Endothelial cell of umbilical vein (primary cell): ENCODE measurements at regions of chr19 and their contacts with region 1.

Region 1: DNA sequence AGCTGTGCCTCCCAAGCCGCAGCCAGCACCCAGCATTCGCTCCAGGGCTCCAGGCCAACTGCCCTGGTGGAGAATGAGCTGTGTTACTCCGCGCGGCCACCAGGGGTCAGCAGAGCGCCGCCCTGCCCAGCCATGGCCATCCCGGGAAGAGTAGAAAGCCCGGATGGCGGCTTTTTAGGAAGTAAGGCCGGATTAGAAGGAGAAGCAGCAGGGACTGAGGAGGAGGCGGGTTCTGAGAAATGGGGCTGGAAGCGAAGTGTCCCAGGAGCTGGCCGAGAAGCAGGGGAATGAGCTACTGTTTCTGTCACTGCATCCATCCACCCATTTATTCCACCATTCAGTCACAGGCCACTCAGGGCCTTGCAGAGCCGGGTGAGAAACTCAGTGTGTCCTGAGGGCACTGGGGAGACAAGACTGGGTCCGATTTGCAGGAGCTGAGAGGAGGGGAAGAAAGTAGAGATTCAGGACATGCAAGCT is 6.6 kb upstream of the NPAS1 start:
- DNase-seq: peak; percentile 66
- H3K4me3 ChIP-seq: no peak overlapping the region
- H3K27ac ChIP-seq: no peak overlapping the region
- H3K4me1 ChIP-seq: no peaks in the 10 kb centered on the region
- H3K27me3 ChIP-seq: no peaks in the 10 kb centered on the region
- CTCF ChIP-seq: peak; percentile 98 to 99
- POLR2A ChIP-seq: no peak

Region 2: DNA sequence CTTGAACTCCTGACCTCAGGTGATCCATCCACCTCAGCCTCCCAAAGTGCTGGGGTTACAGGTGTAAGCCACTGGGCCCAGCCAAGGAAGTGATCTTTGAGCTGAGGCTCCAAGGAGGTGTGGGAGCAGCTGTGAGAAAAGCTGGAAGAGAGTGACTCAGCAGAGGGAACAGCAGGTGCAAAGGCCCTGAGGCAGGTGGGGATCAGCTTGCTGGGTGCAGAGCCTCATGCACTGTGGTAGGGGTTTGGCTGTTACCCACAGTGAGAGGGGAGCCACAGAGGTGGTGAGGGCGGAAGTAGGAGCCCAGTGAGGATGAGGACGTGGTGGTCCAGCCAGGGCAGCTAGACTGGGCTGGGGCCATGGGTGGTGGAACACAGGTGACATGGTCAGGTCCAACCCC is 13.1 kb after region 1 on chr19:
- CTCF ChIA-PET with region 1: interaction called, 29 read pairs
- POLR2A ChIA-PET with region 1: no interaction called
- dilution Hi-C with region 1: no loop called
- intact Hi-C with region 1: no loop called
- DNase-seq: no peak
- H3K4me3 ChIP-seq: no peak overlapping the region
- H3K27ac ChIP-seq: no peak overlapping the region
- H3K4me1 ChIP-seq: peaks cover 9% of the 10 kb centered on the region
- H3K27me3 ChIP-seq: peaks cover 33 to 38% of the 10 kb centered on the region in 2 experiments
- CTCF ChIP-seq: no peak
- POLR2A ChIP-seq: no peak

Region 3: DNA sequence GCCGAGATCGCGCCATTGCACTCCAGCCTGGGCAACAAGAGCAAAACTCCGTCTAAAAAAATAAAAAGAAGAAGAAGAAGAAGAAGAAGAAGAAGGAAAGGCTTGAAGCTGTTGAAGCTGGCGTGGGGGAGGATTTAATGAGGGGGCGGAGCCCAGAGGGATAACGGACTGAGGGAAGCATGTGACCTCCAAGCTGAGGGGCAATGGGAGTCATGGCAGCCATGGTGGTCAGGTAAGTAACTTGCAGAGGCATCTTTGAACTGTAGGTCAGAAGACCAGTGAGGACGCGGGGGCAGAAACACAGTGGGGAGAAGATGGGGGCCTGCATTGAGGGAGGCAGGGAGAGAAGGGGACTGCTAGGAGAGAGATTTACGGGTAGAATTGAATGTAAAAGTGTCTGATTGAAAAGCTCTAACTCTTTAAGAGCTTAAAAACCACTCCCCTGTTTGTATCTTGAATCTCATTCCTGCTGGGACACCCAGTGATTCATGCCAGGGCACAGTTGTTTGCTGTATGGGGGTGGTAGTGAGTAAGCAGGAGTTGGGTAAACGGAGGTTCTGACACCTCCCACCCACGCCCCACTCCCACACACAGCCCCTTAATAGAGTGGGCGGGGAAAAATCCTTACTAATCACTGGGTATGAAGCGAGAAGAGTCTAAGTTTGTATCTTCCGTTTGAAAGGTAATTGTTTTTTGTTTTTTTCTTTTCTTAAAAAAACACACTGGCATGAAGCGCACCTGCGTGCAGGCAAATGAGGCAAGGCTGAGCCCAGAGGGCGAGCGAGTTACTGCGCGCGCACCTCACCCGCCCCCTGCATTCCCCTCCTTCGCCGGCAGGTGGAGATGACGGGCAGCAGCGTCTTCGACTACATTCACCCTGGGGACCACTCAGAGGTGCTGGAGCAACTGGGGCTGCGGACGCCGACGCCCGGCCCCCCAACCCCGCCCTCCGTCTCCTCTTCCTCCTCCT is 22.3 kb after region 1 on chr19:
- CTCF ChIA-PET with region 1: interaction called, 14 read pairs
- POLR2A ChIA-PET with region 1: no interaction called
- dilution Hi-C with region 1: no loop called
- intact Hi-C with region 1: loop called (anchors 1 kb)
- DNase-seq: peak; percentile 92
- H3K4me3 ChIP-seq: peak overlapping the region; percentile 32 to 75 (median 73)
- H3K27ac ChIP-seq: no peak overlapping the region
- H3K4me1 ChIP-seq: peaks cover 8% of the 10 kb centered on the region
- H3K27me3 ChIP-seq: peaks cover 0 to 2% of the 10 kb centered on the region in 2 experiments
- CTCF ChIP-seq: peak; percentile 84 to 94
- POLR2A ChIP-seq: no peak

Region 4: GRCh38 chr19:47047763-47048405 is 34.8 kb after region 1 on chr19:
- CTCF ChIA-PET with region 1: no interaction called
- POLR2A ChIA-PET with region 1: no interaction called
- dilution Hi-C with region 1: no loop called
- intact Hi-C with region 1: no loop called
- DNase-seq: peak; percentile 90
- H3K4me3 ChIP-seq: peak overlapping the region; percentile 37 to 84 (median 62)
- H3K27ac ChIP-seq: no peak overlapping the region
- H3K4me1 ChIP-seq: peaks cover 3% of the 10 kb centered on the region
- H3K27me3 ChIP-seq: no peaks in the 10 kb centered on the region
- CTCF ChIP-seq: no peak
- POLR2A ChIP-seq: no peak

Region 5: GRCh38 chr19:47124937-47125668 is 112.0 kb after region 1 on chr19:
- CTCF ChIA-PET with region 1: interaction called, 40 read pairs
- POLR2A ChIA-PET with region 1: no interaction called
- dilution Hi-C with region 1: no loop called
- intact Hi-C with region 1: loop called (anchors 1 kb)
- DNase-seq: peak; percentile 74
- H3K4me3 ChIP-seq: no peak overlapping the region
- H3K27ac ChIP-seq: no peak overlapping the region
- H3K4me1 ChIP-seq: no peaks in the 10 kb centered on the region
- H3K27me3 ChIP-seq: no peaks in the 10 kb centered on the region
- CTCF ChIP-seq: peak; percentile 50 to 53
- POLR2A ChIP-seq: no peak

Region 6: GRCh38 chr19:47130591-47131227 is 117.6 kb after region 1 on chr19 and contains the start of gene SAE1:
- CTCF ChIA-PET with region 1: interaction called, 40 read pairs
- POLR2A ChIA-PET with region 1: no interaction called
- dilution Hi-C with region 1: no loop called
- intact Hi-C with region 1: loop called (anchors 1 kb)
- DNase-seq: peak; percentile 99
- H3K4me3 ChIP-seq: peak within 1 kb of the TSS; percentile 76 to 93 (median 82)
- H3K27ac ChIP-seq: peak within 1 kb of the TSS; percentile 78
- H3K4me1 ChIP-seq: peaks cover 30% of the 10 kb centered on the region
- H3K27me3 ChIP-seq: no peaks in the 10 kb centered on the region
- CTCF ChIP-seq: peak; percentile 39 to 64
- POLR2A ChIP-seq: peak; percentile 75
- total RNA-seq, gene SAE1: 219 and 223 TPM in 2 replicates